Activated CD8-positive, alpha-beta T cell treated with anti-CD3 and anti-CD28 coated beads, Interleukin-2, amount 10 ng/mL, durations not matched to agents 7 days and 5 days (primary cell): ENCODE measurements at regions of chr3 and their contacts with region 1.

Region 1: DNA sequence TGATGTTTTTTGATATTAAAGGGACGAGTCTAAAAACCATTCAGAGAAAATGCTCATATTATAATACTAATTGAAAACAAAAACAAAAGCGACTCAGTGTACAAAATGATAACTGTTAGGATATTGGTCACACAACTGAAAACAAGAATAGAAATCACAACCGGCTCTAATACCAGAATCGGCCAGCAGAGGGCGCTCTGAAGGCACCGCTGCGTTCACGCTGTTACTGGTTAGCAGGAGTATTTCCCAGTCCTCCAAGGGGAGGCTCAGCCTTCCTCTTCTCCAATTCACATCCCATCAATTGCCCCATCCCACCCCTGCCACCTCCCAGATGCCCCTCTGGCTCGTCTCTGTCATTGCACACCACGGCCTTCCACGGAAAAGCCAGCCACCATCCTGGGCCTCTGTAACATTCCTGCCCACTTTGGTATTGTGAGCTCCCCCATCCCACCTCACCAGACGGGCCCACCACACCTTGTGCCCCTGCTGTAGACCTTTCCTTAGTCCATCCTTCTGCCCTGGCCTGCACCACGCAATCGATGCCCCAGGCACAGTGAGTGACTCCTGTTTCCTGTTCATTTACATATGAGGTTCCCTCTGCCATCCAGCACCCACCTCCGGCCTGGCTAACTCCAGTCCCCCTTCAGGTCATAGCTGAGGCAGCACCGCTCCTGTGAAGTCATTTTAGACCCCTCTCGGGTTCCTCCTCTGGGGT is 8.5 kb downstream of the FAM107A start:
- DNase-seq: peak; percentile 79
- ATAC-seq: peak; percentile 65
- H3K4me3 Mint-ChIP-seq: no peak overlapping the region
- H3K27ac Mint-ChIP-seq: no peak overlapping the region
- H3K4me1 Mint-ChIP-seq: peaks cover 4% of the 10 kb centered on the region
- H3K27me3 Mint-ChIP-seq: peaks cover 3% of the 10 kb centered on the region

Region 2: GRCh38 chr3:58556761-58557221 is 11.9 kb before region 1 on chr3:
- CTCF ChIA-PET with region 1: interaction called, 27 read pairs
- POLR2A ChIA-PET with region 1: no interaction called
- DNase-seq: no peak
- ATAC-seq: no peak
- H3K4me3 Mint-ChIP-seq: no peak overlapping the region
- H3K27ac Mint-ChIP-seq: no peak overlapping the region
- H3K4me1 Mint-ChIP-seq: no peaks in the 10 kb centered on the region
- H3K27me3 Mint-ChIP-seq: peaks cover 7% of the 10 kb centered on the region